Naive thymus-derived CD4-positive, alpha-beta T cell (primary cell): ENCODE measurements at regions of chr2 and their contacts with region 1.

Region 1: DNA sequence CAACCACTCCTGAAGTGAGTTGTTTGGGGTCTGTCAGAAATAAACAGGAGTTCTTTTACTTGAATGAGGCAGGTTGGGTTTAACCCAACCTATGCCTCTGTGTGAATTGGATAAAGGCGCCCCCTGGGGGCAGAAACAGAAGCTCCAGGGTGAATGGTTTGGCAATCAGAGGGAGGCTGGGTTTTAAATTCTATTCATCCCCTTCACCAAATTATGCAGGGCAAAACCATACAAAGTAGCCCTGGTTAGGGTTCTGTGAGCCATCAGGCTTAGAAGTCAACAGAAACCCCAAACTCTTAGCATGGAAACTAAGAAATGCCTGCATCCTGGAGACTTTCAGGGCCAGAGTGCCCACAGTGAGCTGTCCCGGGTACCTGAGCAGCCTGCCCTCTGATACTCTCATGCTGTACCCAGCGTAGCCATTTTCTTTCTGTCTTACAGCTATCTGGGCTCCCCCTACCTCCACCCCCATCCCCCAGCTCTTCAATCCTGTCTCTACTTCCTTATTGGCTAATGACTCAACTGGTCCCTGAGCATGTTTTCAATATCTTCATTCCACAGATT is 241.5 kb downstream of the ICOS start:
- DNase-seq: peak; percentile 35 to 75 (median 63)
- ATAC-seq: peak; percentile 73
- H3K4me3 ChIP-seq: no peak overlapping the region
- H3K4me3 Mint-ChIP-seq: no peak overlapping the region
- H3K27ac ChIP-seq: no peak overlapping the region
- H3K27ac Mint-ChIP-seq: no peak overlapping the region
- H3K4me1 ChIP-seq: no peaks in the 10 kb centered on the region
- H3K4me1 Mint-ChIP-seq: peaks cover 0 to 10% (median 0%) of the 10 kb centered on the region in 7 donors
- H3K27me3 ChIP-seq: no peaks in the 10 kb centered on the region
- H3K27me3 Mint-ChIP-seq: peaks cover 8 to 36% (median 12%) of the 10 kb centered on the region in 5 donors

Region 2: DNA sequence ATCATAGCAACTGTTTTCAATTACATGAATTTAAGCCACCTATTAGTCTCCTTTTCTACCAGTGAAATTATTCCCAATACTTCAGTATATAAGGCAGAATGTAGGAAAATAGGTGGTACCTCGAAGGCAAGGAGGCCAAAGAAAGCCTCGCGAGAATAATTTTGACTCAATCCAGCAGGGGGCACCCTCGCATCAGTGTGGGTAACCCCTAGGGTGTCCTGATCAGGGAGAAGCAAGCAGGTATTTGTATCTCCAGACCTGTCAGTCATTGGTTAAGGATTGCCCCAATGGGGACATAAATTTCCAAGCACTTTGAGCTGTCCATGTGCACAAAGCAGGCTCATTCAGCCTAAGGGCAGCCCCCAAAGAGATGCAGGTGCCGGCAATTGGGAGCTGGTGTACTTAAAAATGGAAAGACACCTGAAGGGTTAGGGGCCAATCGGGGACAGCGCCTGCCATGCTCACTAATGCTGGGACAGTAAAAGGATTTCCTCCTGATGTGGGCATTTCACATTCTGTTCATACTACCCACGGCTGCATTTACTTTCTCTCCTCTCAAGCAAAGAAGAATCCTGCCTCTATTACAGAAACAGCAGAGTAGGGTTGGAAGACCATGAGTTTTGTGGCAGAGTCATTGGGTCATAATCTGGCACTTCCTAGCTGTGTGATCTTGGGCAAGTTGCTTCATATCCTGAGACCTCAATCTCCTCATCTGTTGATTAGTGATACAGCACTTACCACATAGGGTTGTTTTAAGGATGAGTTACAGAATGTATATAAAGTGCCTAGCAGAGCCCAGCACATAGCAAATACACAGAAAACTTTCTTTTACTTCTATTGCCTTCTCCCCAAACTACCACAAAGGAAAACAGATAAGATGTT is 105.4 kb before region 1 on chr2:
- CTCF ChIA-PET with region 1: interaction called, 4 read pairs
- POLR2A ChIA-PET with region 1: no interaction called
- intact Hi-C with region 1: loop called (anchors 1 kb)
- DNase-seq: peak; percentile 9 to 75 (median 44)
- ATAC-seq: peak; percentile 71
- H3K4me3 ChIP-seq: no peak overlapping the region
- H3K4me3 Mint-ChIP-seq: no peak overlapping the region
- H3K27ac ChIP-seq: no peak overlapping the region
- H3K27ac Mint-ChIP-seq: no peak overlapping the region
- H3K4me1 ChIP-seq: no peaks in the 10 kb centered on the region
- H3K4me1 Mint-ChIP-seq: peaks cover 0 to 8% (median 0%) of the 10 kb centered on the region in 7 donors
- H3K27me3 ChIP-seq: no peaks in the 10 kb centered on the region
- H3K27me3 Mint-ChIP-seq: peaks cover 0 to 18% (median 0%) of the 10 kb centered on the region in 5 donors

Region 3: GRCh38 chr2:204166961-204167360 is 11.1 kb before region 1 on chr2:
- CTCF ChIA-PET with region 1: interaction called, 13 read pairs
- POLR2A ChIA-PET with region 1: interaction called, 3 read pairs
- intact Hi-C with region 1: no loop called
- DNase-seq: no peak
- ATAC-seq: no peak
- H3K4me3 ChIP-seq: no peak overlapping the region
- H3K4me3 Mint-ChIP-seq: no peak overlapping the region
- H3K27ac ChIP-seq: no peak overlapping the region
- H3K27ac Mint-ChIP-seq: no peak overlapping the region
- H3K4me1 ChIP-seq: no peaks in the 10 kb centered on the region
- H3K4me1 Mint-ChIP-seq: no peaks in the 10 kb centered on the region
- H3K27me3 ChIP-seq: no peaks in the 10 kb centered on the region
- H3K27me3 Mint-ChIP-seq: peaks cover 0 to 23% (median 3%) of the 10 kb centered on the region in 5 donors

Region 4: DNA sequence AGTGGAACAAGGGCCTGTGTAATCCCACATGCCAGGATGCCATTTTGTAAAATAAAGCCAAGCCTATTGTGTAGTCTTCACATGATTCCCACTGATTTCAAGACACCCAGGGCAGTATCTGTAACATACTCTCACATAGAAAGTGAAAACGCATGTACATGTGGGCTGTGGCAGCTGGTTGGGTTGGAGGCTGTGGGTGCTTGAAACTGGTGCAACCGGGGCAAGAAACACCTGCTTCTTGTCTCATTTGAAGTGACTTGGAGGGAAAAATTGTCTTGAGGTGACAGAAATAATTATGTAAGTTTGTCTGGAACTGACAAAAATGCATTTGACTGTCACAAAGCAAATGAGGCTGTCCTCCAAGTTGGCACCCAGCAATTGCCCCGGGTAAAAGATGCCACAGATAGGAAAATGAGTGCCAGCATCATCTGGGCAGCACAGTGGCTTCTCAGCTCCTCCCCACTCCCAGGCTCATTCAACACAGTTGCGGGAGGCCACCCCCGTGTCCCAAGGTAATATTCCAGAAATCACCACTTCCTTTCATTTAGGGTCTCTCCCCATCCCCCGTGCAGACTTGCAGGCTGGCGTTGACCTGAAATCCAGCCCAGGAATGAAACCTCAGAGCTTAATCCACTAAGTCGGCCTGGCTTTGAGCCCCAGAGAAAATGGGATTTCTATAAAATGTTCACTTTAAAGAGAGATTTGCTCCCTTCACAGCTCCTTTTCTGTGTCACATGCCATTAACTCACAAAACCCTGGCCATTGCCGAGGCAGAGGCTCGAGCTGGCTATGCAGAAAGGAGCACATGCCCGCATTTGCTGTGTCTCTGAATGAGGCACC is 73.3 kb after region 1 on chr2:
- CTCF ChIA-PET with region 1: no interaction called
- POLR2A ChIA-PET with region 1: no interaction called
- intact Hi-C with region 1: no loop called
- DNase-seq: no peak
- ATAC-seq: no peak
- H3K4me3 ChIP-seq: no peak overlapping the region
- H3K4me3 Mint-ChIP-seq: no peak overlapping the region
- H3K27ac ChIP-seq: no peak overlapping the region
- H3K27ac Mint-ChIP-seq: no peak overlapping the region
- H3K4me1 ChIP-seq: no peaks in the 10 kb centered on the region
- H3K4me1 Mint-ChIP-seq: peaks cover 0 to 2% (median 0%) of the 10 kb centered on the region in 7 donors
- H3K27me3 ChIP-seq: no peaks in the 10 kb centered on the region
- H3K27me3 Mint-ChIP-seq: peaks cover 0 to 21% (median 13%) of the 10 kb centered on the region in 5 donors